Panc1 (cell line): ENCODE measurements at regions of chr19 and their contacts with region 1.

Region 1: GRCh38 chr19:47391510-47392223 is 27.7 kb downstream of the MEIS3 start:
- DNase-seq: peak; percentile 36
- ATAC-seq: peak; percentile 92
- H3K4me3 ChIP-seq: no peak overlapping the region
- H3K27ac ChIP-seq: no peak overlapping the region
- H3K4me1 ChIP-seq: no peaks in the 10 kb centered on the region
- H3K27me3 ChIP-seq: no peaks in the 10 kb centered on the region
- CTCF ChIP-seq: peak; percentile 91

Region 2: GRCh38 chr19:47176627-47177090 is 215.0 kb before region 1 on chr19:
- CTCF ChIA-PET with region 1: no interaction called
- POLR2A ChIA-PET with region 1: no interaction called
- in situ Hi-C with region 1: no loop called
- intact Hi-C with region 1: no loop called
- DNase-seq: no peak
- ATAC-seq: no peak
- H3K4me3 ChIP-seq: no peak overlapping the region
- H3K27ac ChIP-seq: no peak overlapping the region
- H3K4me1 ChIP-seq: no peaks in the 10 kb centered on the region; the same call in 1 of the 2 replicates
- H3K27me3 ChIP-seq: no peaks in the 10 kb centered on the region
- CTCF ChIP-seq: no peak

Region 3: GRCh38 chr19:47296036-47296435 is 95.6 kb before region 1 on chr19:
- CTCF ChIA-PET with region 1: interaction called, 3 read pairs
- POLR2A ChIA-PET with region 1: no interaction called
- in situ Hi-C with region 1: no loop called
- intact Hi-C with region 1: loop called (anchors 10 kb)
- DNase-seq: peak; percentile 17
- ATAC-seq: peak; percentile 97
- H3K4me3 ChIP-seq: no peak overlapping the region
- H3K27ac ChIP-seq: no peak overlapping the region
- H3K4me1 ChIP-seq: no peaks in the 10 kb centered on the region
- H3K27me3 ChIP-seq: no peaks in the 10 kb centered on the region
- CTCF ChIP-seq: peak; percentile 77; the same call in 1 of the 2 replicates